ENCODE measurements at regions of chr1 and their contacts with region 1.

Region 1: GRCh38 chr1:48498096-48498791 is 26.2 kb upstream of the SPATA6 start:
- DNase-seq: peak; percentile 70
- ATAC-seq: peak; percentile 76
- H3K4me3 ChIP-seq: no peak overlapping the region
- H3K27ac ChIP-seq: no peak overlapping the region
- H3K4me1 ChIP-seq: peaks cover 12% of the 10 kb centered on the region
- H3K27me3 ChIP-seq: no peaks in the 10 kb centered on the region
- CTCF ChIP-seq: peak; percentile 90

Region 2: DNA sequence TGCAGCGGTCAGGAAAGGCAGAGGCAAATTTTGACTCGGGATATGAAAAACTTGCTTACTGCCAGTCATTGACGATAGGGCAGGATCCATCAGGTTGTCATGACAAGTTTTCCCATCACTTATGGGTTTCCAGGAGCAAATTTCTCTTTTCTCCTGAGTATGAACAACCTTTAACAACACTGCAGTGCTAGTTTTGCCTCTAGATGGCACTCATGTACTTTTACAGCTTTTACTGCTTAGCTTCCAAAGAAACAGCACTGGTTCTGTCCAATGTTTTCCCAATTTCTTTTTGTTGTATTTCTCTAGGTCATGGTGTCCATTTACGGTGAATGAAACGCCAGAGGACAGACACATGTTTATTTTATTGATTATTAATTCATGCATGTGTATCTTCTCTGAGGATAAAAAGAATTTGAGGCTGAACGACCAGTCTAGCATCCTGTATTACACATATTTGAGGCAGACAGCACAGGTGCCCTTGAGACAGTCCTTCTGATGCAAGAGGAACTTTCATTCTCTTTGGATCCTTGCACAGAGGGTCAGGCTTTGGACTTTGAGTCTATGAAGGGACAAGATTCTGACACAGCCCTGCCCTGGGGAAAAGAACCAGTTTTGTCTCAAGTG is 388.7 kb before region 1 on chr1:
- CTCF ChIA-PET with region 1: no interaction called
- POLR2A ChIA-PET with region 1: no interaction called
- intact Hi-C with region 1: loop called (anchors 10 kb)
- DNase-seq: peak; percentile 80
- ATAC-seq: peak; percentile 81
- H3K4me3 ChIP-seq: no peak overlapping the region
- H3K27ac ChIP-seq: no peak overlapping the region
- H3K4me1 ChIP-seq: no peaks in the 10 kb centered on the region
- H3K27me3 ChIP-seq: peaks cover 21% of the 10 kb centered on the region
- CTCF ChIP-seq: peak; percentile 87

Region 3: GRCh38 chr1:48356901-48357300 is 141.3 kb before region 1 on chr1:
- CTCF ChIA-PET with region 1: interaction called, 20 read pairs
- POLR2A ChIA-PET with region 1: no interaction called
- intact Hi-C with region 1: loop called (anchors 1 kb)
- DNase-seq: peak; percentile 4
- ATAC-seq: no peak
- H3K4me3 ChIP-seq: no peak overlapping the region
- H3K27ac ChIP-seq: no peak overlapping the region
- H3K4me1 ChIP-seq: no peaks in the 10 kb centered on the region
- H3K27me3 ChIP-seq: no peaks in the 10 kb centered on the region
- CTCF ChIP-seq: peak; percentile 26; the same call in 1 of the 2 replicates

Region 4: DNA sequence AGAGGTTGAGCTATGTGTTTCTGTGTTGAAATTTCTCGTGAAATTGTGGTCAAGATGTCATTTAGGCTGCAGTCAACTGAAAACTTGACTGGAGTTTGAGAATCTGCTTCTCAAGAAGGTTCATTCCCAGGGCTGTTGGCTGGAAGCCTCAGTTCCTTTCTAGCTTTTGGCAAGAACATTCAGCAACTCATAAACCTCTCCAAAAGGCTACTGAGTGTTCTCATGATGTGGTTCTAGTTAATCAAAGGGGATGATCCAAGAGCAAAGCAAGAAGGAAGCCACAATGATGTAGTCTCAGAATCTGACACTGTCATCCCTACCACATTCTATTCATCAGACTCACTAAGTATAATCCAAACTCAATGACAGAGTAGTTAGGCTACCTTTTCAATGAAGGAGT is 92.8 kb before region 1 on chr1:
- CTCF ChIA-PET with region 1: no interaction called
- POLR2A ChIA-PET with region 1: no interaction called
- intact Hi-C with region 1: no loop called
- DNase-seq: no peak
- ATAC-seq: no peak
- H3K4me3 ChIP-seq: no peak overlapping the region
- H3K27ac ChIP-seq: no peak overlapping the region
- H3K4me1 ChIP-seq: no peaks in the 10 kb centered on the region
- H3K27me3 ChIP-seq: no peaks in the 10 kb centered on the region
- CTCF ChIP-seq: no peak

Region 5: DNA sequence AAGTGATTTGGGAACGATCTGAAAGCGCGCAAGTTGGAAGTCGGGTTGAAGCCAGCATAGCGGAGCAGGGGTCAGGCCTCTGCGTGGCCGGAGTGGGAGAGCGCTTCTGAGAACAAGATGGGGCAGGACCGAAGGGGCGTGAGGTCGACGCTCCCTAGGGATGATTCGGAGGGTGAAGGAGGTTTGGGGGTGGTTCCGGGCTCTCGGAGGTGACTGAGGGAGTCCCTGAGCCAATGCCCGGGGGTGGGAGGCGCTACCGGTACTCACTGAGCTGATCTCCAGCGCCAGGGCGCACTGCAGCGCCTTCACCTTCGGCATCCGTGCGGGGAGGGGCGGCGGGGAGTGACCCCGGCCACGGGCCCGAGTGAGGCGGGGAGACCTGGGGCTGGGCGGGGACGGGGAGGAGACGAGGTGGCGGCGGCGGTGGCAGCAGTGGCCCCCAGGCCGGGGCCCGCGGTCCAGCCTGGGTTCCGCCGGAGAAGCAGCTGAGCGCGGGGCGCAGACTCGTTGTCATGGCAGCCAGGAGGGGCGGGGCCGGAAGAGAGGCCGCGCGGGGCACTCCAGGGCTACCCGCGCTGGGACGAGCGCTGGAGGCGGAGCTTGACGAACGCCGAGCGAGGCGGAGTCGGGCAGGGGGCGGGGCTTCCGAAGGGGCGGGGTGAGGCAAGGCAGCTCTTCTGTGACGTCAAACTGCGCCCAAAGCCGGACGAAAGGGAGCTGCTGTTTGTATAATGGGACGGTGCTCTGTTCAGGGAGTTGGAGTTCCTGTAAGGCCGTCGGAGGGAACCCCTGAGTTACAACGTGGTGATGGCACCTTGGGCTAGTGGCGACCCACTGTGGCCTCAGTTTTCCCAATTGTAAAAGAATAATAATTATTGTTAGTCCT is 26.3 kb before region 1 on chr1 and contains the start of gene SPATA6:
- CTCF ChIA-PET with region 1: interaction called, 10 read pairs
- POLR2A ChIA-PET with region 1: interaction called, 3 read pairs
- intact Hi-C with region 1: loop called (anchors 2 kb)
- DNase-seq: peak; percentile 89
- ATAC-seq: peak; percentile 92
- H3K4me3 ChIP-seq: peak within 1 kb of the TSS; percentile 77
- H3K27ac ChIP-seq: no peak within 1 kb of the TSS
- H3K4me1 ChIP-seq: peaks cover 7% of the 10 kb centered on the region; the same call in 1 of the 2 replicates
- H3K27me3 ChIP-seq: no peaks in the 10 kb centered on the region
- CTCF ChIP-seq: no peak
- total RNA-seq, gene SPATA6: 0.40 and 2.8 TPM in 2 replicates

Region 6: DNA sequence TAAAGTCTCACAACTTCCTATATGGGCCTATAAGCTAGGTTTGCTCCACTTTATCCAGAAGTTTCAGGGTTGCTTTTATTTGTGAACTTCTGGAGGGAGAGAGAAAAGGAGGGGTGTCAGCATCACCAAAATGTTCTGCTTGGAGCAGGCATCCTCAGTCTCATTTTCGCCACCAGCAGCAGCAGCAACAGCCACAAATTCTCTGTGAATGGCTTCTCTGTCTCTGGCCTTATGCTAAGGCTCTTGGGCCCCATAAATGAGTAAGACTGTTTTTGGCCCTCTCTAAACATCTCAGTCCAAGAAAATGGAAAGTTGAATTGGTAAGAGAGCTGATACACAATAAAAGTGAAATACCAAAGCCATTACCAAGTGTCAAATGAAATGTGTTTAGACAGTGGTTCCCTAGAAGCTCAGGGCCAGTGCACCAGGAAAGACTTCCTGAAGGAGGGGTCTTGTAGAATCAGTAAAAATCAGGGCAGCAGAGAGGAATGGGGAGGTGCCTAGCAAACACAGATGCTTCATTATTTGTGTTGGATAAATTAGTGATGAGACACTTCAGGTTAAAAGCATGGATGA is 26.7 kb after region 1 on chr1:
- CTCF ChIA-PET with region 1: interaction called, 7 read pairs
- POLR2A ChIA-PET with region 1: no interaction called
- intact Hi-C with region 1: loop called (anchors 1 kb)
- DNase-seq: peak; percentile 2
- ATAC-seq: peak; percentile 52
- H3K4me3 ChIP-seq: no peak overlapping the region
- H3K27ac ChIP-seq: no peak overlapping the region
- H3K4me1 ChIP-seq: peaks cover 10% of the 10 kb centered on the region; the same call in 1 of the 2 replicates
- H3K27me3 ChIP-seq: 0 out of 2 replicates have a peak, but pooled peaks cover 14% of the 10 kb centered on the region
- CTCF ChIP-seq: no peak

Region 7: GRCh38 chr1:48530727-48531351 is 32.6 kb after region 1 on chr1:
- CTCF ChIA-PET with region 1: interaction called, 7 read pairs
- POLR2A ChIA-PET with region 1: no interaction called
- intact Hi-C with region 1: loop called (anchors 1 kb)
- DNase-seq: peak; percentile 81
- ATAC-seq: peak; percentile 37
- H3K4me3 ChIP-seq: no peak overlapping the region
- H3K27ac ChIP-seq: no peak overlapping the region
- H3K4me1 ChIP-seq: peaks cover 16% of the 10 kb centered on the region
- H3K27me3 ChIP-seq: 0 out of 2 replicates have a peak, but pooled peaks cover 10% of the 10 kb centered on the region
- CTCF ChIP-seq: peak; percentile 93

Region 8: GRCh38 chr1:48793863-48794262 is 295.6 kb after region 1 on chr1:
- CTCF ChIA-PET with region 1: no interaction called
- POLR2A ChIA-PET with region 1: no interaction called
- intact Hi-C with region 1: no loop called
- DNase-seq: no peak
- ATAC-seq: no peak
- H3K4me3 ChIP-seq: no peak overlapping the region
- H3K27ac ChIP-seq: no peak overlapping the region
- H3K4me1 ChIP-seq: peaks cover 7% of the 10 kb centered on the region
- H3K27me3 ChIP-seq: no peaks in the 10 kb centered on the region
- CTCF ChIP-seq: no peak